ENCODE measurements at regions of chr10 and their contacts with region 1.

Region 1: GRCh38 chr10:31808258-31809218 is 120.1 kb downstream of the ARHGAP12 start:
- DNase-seq: peak; percentile 24 to 57
- ATAC-seq: peak; percentile 91
- H3K4me3 ChIP-seq: peak overlapping the region; percentile 45 to 60 (median 53)
- H3K27ac ChIP-seq: peak overlapping the region; percentile 85 to 92 (median 89)
- H3K4me1 ChIP-seq: peaks cover 21 to 32% of the 10 kb centered on the region in 2 donors
- H3K27me3 ChIP-seq: no peaks in the 10 kb centered on the region
- CTCF ChIP-seq: peak; percentile 58 to 82 (median 75)
- POLR2A ChIP-seq: peak in 1 of 2 donors; percentile 25

Region 2: GRCh38 chr10:30722956-30723620 is 1085.5 kb before region 1 on chr10:
- in situ Hi-C with region 1: loop called in 3 of 4 experiments (anchors 5 kb)
- intact Hi-C with region 1: loop called (anchors 1 kb)
- DNase-seq: no peak
- ATAC-seq: no peak
- H3K4me3 ChIP-seq: no peak overlapping the region
- H3K27ac ChIP-seq: no peak overlapping the region
- H3K4me1 ChIP-seq: no peaks in the 10 kb centered on the region
- H3K27me3 ChIP-seq: no peaks in the 10 kb centered on the region
- CTCF ChIP-seq: no peak
- POLR2A ChIP-seq: no peak

Region 3: DNA sequence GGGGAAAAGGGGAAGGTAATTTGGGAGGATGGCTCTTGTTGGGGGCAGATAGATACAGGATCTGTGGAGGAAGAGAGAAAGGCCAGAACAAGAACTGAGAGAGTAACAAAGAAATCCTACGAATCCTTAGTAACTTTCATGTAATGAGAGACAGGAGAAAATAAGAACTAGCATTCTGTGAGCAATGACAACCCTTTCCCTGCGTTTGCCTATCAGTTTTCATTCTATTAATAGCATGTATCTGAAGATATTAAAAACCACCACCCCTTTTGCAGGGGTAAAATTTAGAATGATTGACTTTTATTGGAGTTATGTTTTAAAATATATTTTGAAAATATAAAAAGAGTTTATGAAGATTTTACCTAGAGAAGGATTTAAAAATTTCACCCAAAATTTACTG is 356.8 kb before region 1 on chr10:
- in situ Hi-C with region 1: no loop called
- intact Hi-C with region 1: no loop called
- DNase-seq: no peak
- ATAC-seq: peak; percentile 47 to 58
- H3K4me3 ChIP-seq: peak overlapping the region in 1 of 4 donors; percentile 8
- H3K27ac ChIP-seq: peak overlapping the region; percentile 32 to 67 (median 60)
- H3K4me1 ChIP-seq: peaks cover 33 to 35% of the 10 kb centered on the region in 2 donors
- H3K27me3 ChIP-seq: no peaks in the 10 kb centered on the region
- CTCF ChIP-seq: no peak
- POLR2A ChIP-seq: no peak

Region 4: DNA sequence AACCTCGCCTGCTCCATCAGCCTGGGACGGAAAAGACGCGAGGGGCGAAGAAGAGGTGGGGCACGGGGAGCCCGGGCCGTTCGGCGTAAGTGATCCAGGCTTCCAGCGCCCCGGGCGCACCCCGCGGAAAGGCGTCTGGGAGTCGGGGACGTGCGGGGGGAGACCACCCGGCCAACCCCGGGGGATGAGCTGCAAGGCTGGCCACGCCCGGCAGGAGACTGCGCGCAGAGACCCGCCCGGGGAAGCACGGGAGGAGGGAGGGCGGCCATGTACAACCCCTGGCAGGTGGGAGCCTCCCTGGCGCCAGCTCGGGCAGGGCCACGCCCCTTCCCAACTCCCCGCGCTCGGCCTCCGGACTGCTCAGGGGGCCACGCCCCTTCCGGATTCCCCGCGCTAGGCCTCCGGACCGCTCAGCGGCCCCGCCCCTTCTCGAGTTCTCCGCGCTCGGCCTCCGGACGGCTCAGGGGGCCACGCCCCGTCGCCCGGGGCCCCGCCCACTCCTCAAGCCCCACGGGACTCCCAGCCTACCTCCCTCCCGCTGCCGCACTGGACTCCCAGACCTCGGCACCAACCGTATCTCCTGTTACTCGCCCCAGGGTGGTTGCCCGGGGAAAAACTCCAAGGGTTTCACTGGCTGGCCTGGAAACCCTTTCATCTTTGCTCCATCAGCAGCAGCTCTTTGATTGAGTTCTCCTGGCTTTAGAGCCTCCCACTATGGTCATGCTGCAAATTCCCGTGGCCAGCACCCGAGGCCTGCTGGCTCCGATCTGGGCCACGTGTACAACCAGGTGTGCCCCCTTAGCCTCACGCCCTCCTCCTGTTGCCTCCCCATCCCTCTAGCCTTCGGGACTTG is 205.1 kb before region 1 on chr10:
- in situ Hi-C with region 1: no loop called
- intact Hi-C with region 1: loop called (anchors 1 kb)
- DNase-seq: peak; percentile 95 to 97
- ATAC-seq: peak; percentile 75
- H3K4me3 ChIP-seq: peak overlapping the region; percentile 68 to 97 (median 76)
- H3K27ac ChIP-seq: peak overlapping the region; percentile 92 to 99 (median 96)
- H3K4me1 ChIP-seq: peaks cover 14 to 19% of the 10 kb centered on the region in 2 donors
- H3K27me3 ChIP-seq: no peaks in the 10 kb centered on the region
- CTCF ChIP-seq: peak in 3 of 5 experiments; percentile 13 to 34 (median 23)
- POLR2A ChIP-seq: peak; percentile 85 to 86

Region 5: DNA sequence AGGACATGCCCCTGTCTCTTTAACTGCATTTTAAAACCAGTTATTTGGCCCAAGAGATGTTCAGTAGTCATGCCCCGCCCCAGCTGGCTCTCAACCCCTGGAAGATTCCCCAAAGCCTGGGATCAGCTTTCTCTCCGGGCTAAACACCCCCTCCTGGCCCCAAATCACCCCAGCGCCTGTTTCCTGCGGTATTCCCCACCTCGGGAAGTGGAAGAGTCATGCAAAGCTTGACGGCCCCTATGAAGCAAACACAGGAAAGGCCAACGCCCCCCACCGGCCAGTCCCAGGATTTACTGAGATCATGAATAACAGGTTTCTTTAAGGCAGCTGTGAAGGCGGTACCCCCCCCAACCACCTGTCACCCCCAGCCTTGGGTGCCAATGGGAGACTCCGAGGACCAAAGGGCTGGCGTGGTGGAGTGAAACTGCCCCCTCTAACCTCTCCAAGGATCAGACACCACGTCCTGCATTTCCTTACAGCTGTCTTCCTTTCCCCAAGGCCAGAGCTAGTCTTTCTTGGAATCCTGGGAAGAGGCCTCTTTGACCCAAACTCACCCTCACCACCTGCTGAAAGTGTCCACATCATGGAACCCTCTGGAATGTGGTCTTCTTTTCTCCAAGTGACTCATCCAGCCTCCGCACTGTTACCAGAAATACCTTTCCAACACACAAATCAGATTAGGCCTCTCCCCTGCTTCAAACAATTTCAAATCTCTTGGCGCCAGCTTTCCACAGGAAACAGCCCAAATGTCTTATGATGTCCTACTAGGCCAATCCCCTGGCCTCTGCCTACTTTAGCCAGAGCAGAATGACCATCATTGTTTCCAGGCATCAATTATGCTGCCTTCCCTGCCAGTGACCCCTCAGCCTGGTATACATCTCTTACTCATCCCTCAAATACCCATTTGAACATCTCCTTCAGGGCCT is 188.0 kb before region 1 on chr10:
- in situ Hi-C with region 1: no loop called
- intact Hi-C with region 1: loop called (anchors 5 kb)
- DNase-seq: peak; percentile 59 to 80
- ATAC-seq: peak; percentile 31 to 49
- H3K4me3 ChIP-seq: no peak overlapping the region
- H3K27ac ChIP-seq: peak overlapping the region; percentile 42 to 69 (median 59)
- H3K4me1 ChIP-seq: peaks cover 30 to 35% of the 10 kb centered on the region in 2 donors
- H3K27me3 ChIP-seq: no peaks in the 10 kb centered on the region
- CTCF ChIP-seq: peak; percentile 22 to 45 (median 35)
- POLR2A ChIP-seq: no peak

Region 6: DNA sequence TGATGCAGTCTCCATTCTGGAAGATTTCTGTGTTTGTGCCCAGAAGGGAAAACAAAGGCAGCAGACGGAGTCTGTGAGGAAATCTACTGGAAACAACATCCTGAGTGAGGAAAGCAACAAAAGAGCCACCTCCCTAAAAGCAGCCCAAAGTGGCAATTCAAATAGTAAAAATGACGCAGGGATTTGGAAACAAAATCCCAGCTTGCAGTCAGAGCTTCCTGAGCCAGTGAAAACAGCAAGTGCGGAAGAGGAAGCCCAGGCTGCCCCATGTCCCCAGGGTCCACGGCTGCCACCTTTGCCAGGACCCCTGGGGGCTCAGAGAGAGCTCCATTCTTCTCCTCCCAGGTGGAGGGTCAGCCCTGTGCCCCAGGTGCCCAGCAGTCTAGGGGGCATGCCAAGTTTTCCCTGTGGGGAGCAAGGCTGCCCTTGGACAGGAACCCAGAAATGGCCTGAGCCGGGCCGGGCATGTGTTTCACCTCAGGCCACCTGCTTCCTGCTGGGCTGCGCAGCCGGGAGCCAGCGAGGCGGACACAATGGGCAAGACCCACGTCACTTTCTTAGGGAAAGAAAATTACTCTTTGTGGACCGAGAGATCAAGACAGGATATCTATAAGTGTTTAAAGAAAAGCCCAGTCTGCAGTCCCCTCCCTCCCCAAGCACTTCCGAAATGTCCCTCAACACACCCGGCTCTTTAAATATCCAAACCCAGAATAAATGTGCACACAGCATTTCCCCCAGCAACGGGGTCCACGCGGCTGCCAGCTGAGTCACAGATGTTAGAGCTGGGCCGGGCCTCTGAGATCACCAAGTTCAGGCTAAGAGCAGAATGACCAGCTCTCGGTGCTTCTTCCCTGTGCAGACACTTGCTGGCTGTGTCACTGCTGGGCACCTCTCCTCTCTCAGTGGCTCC is 111.0 kb before region 1 on chr10:
- in situ Hi-C with region 1: loop called in 2 of 4 experiments (anchors 5 to 10 kb)
- intact Hi-C with region 1: no loop called
- DNase-seq: peak; percentile 64 to 77
- ATAC-seq: peak; percentile 63 to 70
- H3K4me3 ChIP-seq: peak overlapping the region; percentile 10 to 45 (median 22)
- H3K27ac ChIP-seq: peak overlapping the region; percentile 78 to 85 (median 82)
- H3K4me1 ChIP-seq: peaks cover 40 to 51% of the 10 kb centered on the region in 2 donors
- H3K27me3 ChIP-seq: no peaks in the 10 kb centered on the region
- CTCF ChIP-seq: no peak
- POLR2A ChIP-seq: peak in 1 of 2 donors; percentile 20

Region 7: DNA sequence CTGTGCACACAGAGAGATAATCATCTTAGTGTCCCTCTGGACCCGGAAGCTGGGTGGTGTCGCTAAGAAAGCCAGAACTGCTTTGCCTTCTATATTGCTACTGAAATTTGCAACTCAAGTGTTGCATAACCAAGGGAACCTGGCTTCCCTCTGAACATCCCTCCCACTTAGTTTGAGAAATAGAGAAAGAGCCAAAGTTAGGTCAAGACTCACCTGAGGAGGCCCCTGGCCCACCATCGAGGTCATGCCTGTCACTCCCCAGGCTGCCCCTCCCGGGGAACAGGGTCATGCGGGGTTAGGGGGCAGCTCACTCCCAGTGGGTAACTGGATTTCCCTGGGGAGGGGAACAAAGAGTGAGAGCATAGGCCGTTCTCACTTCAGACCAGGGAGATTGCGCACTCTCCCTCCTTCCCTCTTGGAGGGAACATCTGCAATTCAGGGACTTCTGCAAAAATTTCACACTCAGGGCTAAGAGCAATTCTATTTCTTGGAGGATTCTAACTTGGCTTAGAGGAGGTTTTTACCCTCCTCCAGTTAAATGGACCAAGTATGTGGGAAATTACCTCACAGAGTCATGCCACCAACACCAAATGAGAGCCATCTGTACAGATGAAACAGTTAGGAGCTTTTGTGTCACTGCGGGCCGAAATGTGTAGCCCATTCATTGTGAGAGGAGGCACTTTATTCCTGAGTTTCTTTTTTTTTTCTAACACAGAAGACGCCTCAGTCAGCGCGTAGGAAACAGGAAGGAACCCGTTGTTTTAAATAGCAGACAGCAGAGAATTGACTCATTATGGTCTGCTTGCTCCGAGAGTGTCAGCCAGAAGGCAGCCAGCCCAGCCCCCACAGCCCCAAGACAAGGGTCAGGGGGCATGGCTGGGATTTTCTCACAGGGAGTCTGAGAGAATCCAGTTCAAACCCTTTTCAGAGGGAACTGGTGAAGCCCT is 101.2 kb before region 1 on chr10:
- in situ Hi-C with region 1: loop called (anchors 5 to 10 kb)
- intact Hi-C with region 1: loop called (anchors 1 kb)
- DNase-seq: peak; percentile 37 to 46
- ATAC-seq: peak; percentile 5 to 24
- H3K4me3 ChIP-seq: peak overlapping the region in 1 of 4 donors; percentile 21
- H3K27ac ChIP-seq: peak overlapping the region; percentile 83 to 94 (median 88)
- H3K4me1 ChIP-seq: peaks cover 35 to 41% of the 10 kb centered on the region in 2 donors
- H3K27me3 ChIP-seq: no peaks in the 10 kb centered on the region
- CTCF ChIP-seq: no peak
- POLR2A ChIP-seq: peak in 1 of 2 donors; percentile 18

Region 8: DNA sequence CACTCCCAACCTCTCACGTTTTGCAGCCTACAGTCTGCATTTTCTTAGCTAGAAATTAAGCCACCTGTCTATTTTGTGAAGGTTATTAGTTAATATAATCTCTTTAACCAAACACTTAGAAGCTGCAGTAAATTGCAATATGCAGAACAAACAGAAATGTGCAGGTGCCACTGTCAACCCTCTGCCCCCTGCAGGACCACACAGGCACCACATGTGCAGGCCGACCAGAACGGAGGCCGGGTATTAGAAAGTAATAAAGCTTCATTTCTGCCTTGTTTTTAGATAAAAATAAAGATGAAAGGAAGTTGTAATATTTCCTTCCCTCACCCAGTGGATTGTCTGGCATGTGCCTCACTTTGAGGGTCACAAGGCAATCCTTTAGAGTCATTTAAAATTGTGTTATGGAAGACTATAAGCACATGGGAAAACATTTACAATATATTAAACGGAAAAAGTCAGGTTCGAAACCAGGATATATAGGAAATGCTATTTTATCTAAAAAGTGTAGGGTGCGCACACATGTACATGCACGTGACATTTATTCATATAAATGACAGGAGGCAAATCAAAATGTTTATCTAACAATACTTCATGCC is 38.1 kb before region 1 on chr10:
- in situ Hi-C with region 1: no loop called
- intact Hi-C with region 1: loop called (anchors 2 kb)
- DNase-seq: no peak
- ATAC-seq: no peak
- H3K4me3 ChIP-seq: no peak overlapping the region
- H3K27ac ChIP-seq: peak overlapping the region in 2 of 4 donors; percentile 92 to 95
- H3K4me1 ChIP-seq: peaks cover 13 to 36% of the 10 kb centered on the region in 2 donors
- H3K27me3 ChIP-seq: no peaks in the 10 kb centered on the region
- CTCF ChIP-seq: peak; percentile 59 to 72 (median 65)
- POLR2A ChIP-seq: no peak